ENCODE measurements at regions of chr4 and their contacts with region 1.

Region 1: GRCh38 chr4:2220016-2220630 is 21.8 kb downstream of the HAUS3 start:
- DNase-seq: peak; percentile 78
- ATAC-seq: peak; percentile 77
- H3K4me3 ChIP-seq: no peak overlapping the region
- H3K27ac ChIP-seq: no peak overlapping the region
- H3K4me1 ChIP-seq: peaks cover 29% of the 10 kb centered on the region
- H3K27me3 ChIP-seq: no peaks in the 10 kb centered on the region
- CTCF ChIP-seq: peak; percentile 87

Region 2: GRCh38 chr4:2462218-2462991 is 242.3 kb after region 1 on chr4:
- CTCF ChIA-PET with region 1: interaction called, 3 read pairs
- POLR2A ChIA-PET with region 1: no interaction called
- intact Hi-C with region 1: loop called (anchors 5 kb)
- DNase-seq: peak; percentile 51
- ATAC-seq: peak; percentile 94
- H3K4me3 ChIP-seq: peak overlapping the region; percentile 60
- H3K27ac ChIP-seq: no peak overlapping the region
- H3K4me1 ChIP-seq: no peaks in the 10 kb centered on the region
- H3K27me3 ChIP-seq: no peaks in the 10 kb centered on the region
- CTCF ChIP-seq: peak; percentile 41; the same call in 1 of the 2 replicates

Measured in PC-3 (cell line).